Head of caudate nucleus (tissue), 42 donors: ENCODE measurements at regions of chr17 and their contacts with region 1.

Region 1: GRCh38 chr17:78013683-78014467 is 55.4 kb downstream of the TNRC6C start:
- DNase-seq: peak in 32 of 42 donors; percentile 28 to 88 (median 71)

Region 2: GRCh38 chr17:77542551-77543490 is 471.1 kb before region 1 on chr17:
- intact Hi-C with region 1: loop called (anchors 5 kb)
- DNase-seq: peak; percentile 72 to 96 (median 88)

Region 3: DNA sequence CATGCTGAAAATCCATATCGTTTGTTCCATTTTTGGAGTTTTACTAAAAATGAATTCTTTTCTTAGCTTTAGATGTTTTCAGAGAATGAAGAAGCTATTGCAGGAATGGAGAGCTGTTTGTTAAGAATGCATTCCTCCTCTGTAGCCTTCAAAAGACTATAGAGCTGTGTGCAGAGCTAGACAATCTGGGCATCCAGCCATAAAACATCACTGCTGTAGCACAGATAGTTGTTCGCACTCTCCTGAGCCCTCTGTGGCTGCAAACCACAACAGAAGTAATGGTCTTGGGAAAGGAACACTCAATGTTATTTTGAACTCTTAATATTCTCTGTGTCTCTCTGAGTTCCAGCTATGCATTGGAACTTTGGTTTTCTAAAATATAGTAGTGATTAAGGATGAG is 50.4 kb before region 1 on chr17:
- intact Hi-C with region 1: loop called (anchors 5 kb)
- DNase-seq: peak in 32 of 42 donors; percentile 24 to 87 (median 67)

Region 4: DNA sequence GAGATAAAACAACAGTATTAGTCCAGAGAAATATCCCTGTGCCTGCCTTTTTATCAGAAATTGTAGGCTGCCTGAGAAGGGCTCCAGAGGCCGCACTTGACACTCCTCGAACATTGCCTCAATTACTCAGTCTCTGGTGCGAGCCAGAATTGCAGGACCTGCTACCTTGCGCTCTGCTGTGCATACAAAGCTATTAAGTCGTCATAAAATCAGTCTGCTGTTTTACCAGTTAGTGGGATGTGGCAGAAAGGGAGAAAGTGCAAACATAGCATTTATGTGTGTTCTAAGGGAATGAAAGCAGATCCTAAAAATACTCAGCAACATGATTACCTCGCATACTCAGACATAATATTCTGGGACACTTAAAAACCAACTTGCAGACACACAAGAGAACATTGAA is 44.1 kb after region 1 on chr17:
- intact Hi-C with region 1: no loop called
- DNase-seq: peak in 7 of 42 donors; percentile 20 to 67 (median 39)

Region 5: DNA sequence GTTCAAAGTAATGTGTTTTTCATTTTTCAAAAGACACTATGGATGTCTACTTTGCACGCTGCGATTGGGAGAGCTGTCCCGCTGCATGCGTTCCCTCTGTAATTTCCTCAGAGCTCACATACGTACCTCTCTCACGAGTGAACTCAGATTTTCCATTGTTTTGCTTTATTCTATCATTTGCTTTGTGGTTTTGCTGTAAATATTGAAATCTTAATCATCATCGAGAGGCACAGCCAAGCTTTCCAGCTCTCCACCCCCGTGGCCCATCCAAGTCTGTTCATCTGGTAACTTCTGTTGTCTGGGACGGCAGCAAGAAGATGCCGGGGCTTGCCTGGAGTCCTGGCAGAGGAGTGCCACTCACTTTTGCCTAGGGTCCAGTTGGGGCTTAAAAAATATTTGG is 93.6 kb after region 1 on chr17:
- intact Hi-C with region 1: no loop called
- DNase-seq: peak in 1 of 42 donors; percentile 33